HepG2 (cell line): ENCODE measurements at regions of chr11 and their contacts with region 1.

Region 1: GRCh38 chr11:114909866-114910265 is 231.5 kb downstream of the NXPE2 start:
- DNase-seq: peak; percentile 9
- ATAC-seq: peak; percentile 77
- H3K4me3 ChIP-seq: no peak overlapping the region
- H3K27ac ChIP-seq: no peak overlapping the region
- H3K4me1 ChIP-seq: no peaks in the 10 kb centered on the region
- H3K27me3 ChIP-seq: peaks cover 0 to 4% of the 10 kb centered on the region in 2 experiments; a peak in 1 of 5 replicates
- CTCF ChIP-seq: 0 out of 2 replicates have a peak, but pooled peaks have one; percentile 31
- EP300 ChIP-seq: no peak
- POLR2A ChIP-seq: no peak
- RAD21 ChIP-seq: no peak

Region 2: DNA sequence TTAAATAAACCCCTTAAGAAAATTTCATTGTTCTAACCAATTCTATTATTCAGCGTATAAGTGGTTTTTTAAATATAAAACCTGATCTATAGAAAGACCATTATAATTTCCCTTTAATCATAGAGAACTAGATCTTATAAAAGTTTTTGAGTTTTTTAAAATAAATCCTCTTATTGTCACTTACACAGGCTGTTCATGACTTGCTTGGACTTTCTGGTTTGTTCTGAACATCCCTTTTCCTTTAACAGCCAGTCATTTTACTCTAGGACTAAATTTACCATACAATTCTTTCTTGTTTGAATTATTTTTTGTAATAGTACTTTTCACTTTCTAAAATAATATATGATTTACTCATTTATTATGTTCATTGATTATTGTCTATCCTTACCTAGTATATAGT is 226.9 kb before region 1 on chr11:
- CTCF ChIA-PET with region 1: no interaction called
- POLR2A ChIA-PET with region 1: no interaction called
- in situ Hi-C with region 1: no loop called
- intact Hi-C with region 1: no loop called
- DNase-seq: no peak
- ATAC-seq: no peak
- H3K4me3 ChIP-seq: no peak overlapping the region
- H3K27ac ChIP-seq: no peak overlapping the region
- H3K4me1 ChIP-seq: no peaks in the 10 kb centered on the region
- H3K27me3 ChIP-seq: no peaks in the 10 kb centered on the region
- CTCF ChIP-seq: no peak
- EP300 ChIP-seq: no peak
- POLR2A ChIP-seq: no peak
- RAD21 ChIP-seq: no peak

Region 3: GRCh38 chr11:114925591-114925990 is 15.7 kb after region 1 on chr11:
- CTCF ChIA-PET with region 1: no interaction called
- POLR2A ChIA-PET with region 1: no interaction called
- in situ Hi-C with region 1: no loop called
- intact Hi-C with region 1: no loop called
- DNase-seq: no peak
- ATAC-seq: no peak
- H3K4me3 ChIP-seq: no peak overlapping the region
- H3K27ac ChIP-seq: no peak overlapping the region
- H3K4me1 ChIP-seq: no peaks in the 10 kb centered on the region
- H3K27me3 ChIP-seq: peaks cover 0 to 4% of the 10 kb centered on the region in 2 experiments; a peak in 1 of 5 replicates
- CTCF ChIP-seq: no peak
- EP300 ChIP-seq: no peak
- POLR2A ChIP-seq: no peak
- RAD21 ChIP-seq: no peak

Region 4: DNA sequence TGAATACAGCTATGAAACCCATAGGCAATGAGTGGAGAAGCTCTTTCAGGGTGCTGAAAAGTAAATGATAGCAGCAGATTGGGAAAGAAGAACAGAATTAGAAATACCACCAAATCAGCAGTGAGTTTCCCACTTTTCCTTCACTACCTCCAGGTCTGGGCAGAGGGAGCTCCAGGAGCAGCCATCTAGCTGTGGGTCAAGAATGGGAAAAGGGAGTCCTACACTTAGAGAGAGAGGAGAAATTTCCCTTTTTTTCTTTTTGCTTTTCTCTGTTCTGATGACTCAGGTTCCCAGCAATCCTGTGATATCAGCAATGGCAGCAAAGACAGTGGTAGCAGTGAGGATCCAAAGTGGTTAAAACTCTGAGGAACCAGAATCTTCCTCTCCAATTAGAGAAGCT is 32.3 kb after region 1 on chr11:
- CTCF ChIA-PET with region 1: no interaction called
- POLR2A ChIA-PET with region 1: no interaction called
- in situ Hi-C with region 1: loop called (anchors 5 kb)
- intact Hi-C with region 1: loop called (anchors 1 kb)
- DNase-seq: no peak
- ATAC-seq: no peak
- H3K4me3 ChIP-seq: no peak overlapping the region
- H3K27ac ChIP-seq: no peak overlapping the region
- H3K4me1 ChIP-seq: no peaks in the 10 kb centered on the region
- H3K27me3 ChIP-seq: peaks cover 0 to 6% of the 10 kb centered on the region in 2 experiments; a peak in 1 of 5 replicates
- CTCF ChIP-seq: 0 out of 2 replicates have a peak, but pooled peaks have one; percentile 12
- EP300 ChIP-seq: no peak
- POLR2A ChIP-seq: no peak
- RAD21 ChIP-seq: no peak

Region 5: GRCh38 chr11:114949614-114950351 is 39.9 kb after region 1 on chr11:
- CTCF ChIA-PET with region 1: no interaction called
- POLR2A ChIA-PET with region 1: no interaction called
- in situ Hi-C with region 1: loop called (anchors 5 kb)
- intact Hi-C with region 1: loop called (anchors 1 kb)
- DNase-seq: no peak
- ATAC-seq: no peak
- H3K4me3 ChIP-seq: no peak overlapping the region
- H3K27ac ChIP-seq: no peak overlapping the region
- H3K4me1 ChIP-seq: no peaks in the 10 kb centered on the region
- H3K27me3 ChIP-seq: peaks cover 0 to 6% of the 10 kb centered on the region in 2 experiments; a peak in 1 of 5 replicates
- CTCF ChIP-seq: no peak
- EP300 ChIP-seq: no peak
- POLR2A ChIP-seq: no peak
- RAD21 ChIP-seq: no peak